ENCODE measurements at regions of chr2 and their contacts with region 1.

Region 1: DNA sequence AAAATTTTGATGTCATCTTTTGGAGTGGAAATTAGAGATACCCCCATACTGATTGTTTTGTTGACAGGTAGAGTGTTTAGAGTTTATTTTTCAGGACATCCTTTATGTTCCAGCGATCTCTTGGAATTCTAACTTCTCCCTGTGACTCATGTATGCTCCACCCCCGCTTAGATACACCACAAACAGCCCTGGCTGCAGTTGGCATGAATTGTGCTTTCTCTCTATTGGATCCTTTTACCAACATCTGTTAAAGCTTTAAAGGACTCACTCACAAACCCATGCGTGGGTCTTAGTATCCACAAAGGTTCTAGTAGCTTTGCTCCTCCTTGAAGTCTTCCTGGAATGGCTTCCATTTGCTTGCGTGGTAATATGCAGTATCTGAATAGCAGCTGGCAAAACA is 409.5 kb upstream of the POU3F3 start:
- DNase-seq: no peak
- H3K4me3 ChIP-seq: no peak overlapping the region
- H3K4me3 Mint-ChIP-seq: no peak overlapping the region
- H3K27ac ChIP-seq: no peak overlapping the region
- H3K27ac Mint-ChIP-seq: no peak overlapping the region
- H3K4me1 ChIP-seq: peaks cover 0 to 3% of the 10 kb centered on the region in 2 donors
- H3K4me1 Mint-ChIP-seq: peaks cover 9% of the 10 kb centered on the region
- H3K27me3 ChIP-seq: no peaks in the 10 kb centered on the region
- H3K27me3 Mint-ChIP-seq: peaks cover 0 to 11% (median 4%) of the 10 kb centered on the region in 3 donors
- CTCF ChIP-seq: no peak

Region 2: GRCh38 chr2:104344306-104344705 is 100.1 kb before region 1 on chr2:
- intact Hi-C with region 1: no loop called
- DNase-seq: no peak
- H3K4me3 ChIP-seq: no peak overlapping the region
- H3K4me3 Mint-ChIP-seq: no peak overlapping the region
- H3K27ac ChIP-seq: no peak overlapping the region
- H3K27ac Mint-ChIP-seq: no peak overlapping the region
- H3K4me1 ChIP-seq: no peaks in the 10 kb centered on the region
- H3K4me1 Mint-ChIP-seq: no peaks in the 10 kb centered on the region
- H3K27me3 ChIP-seq: no peaks in the 10 kb centered on the region
- H3K27me3 Mint-ChIP-seq: peaks cover 1 to 4% (median 3%) of the 10 kb centered on the region in 3 donors
- CTCF ChIP-seq: no peak

Region 3: GRCh38 chr2:104849618-104850141 is 405.3 kb after region 1 on chr2:
- intact Hi-C with region 1: loop called (anchors 5 kb)
- DNase-seq: peak; percentile 51 to 69 (median 66)
- H3K4me3 ChIP-seq: no peak overlapping the region
- H3K4me3 Mint-ChIP-seq: peak overlapping the region in 1 of 2 donors; percentile 82
- H3K27ac ChIP-seq: no peak overlapping the region
- H3K27ac Mint-ChIP-seq: no peak overlapping the region
- H3K4me1 ChIP-seq: peaks cover 30 to 38% of the 10 kb centered on the region in 2 donors
- H3K4me1 Mint-ChIP-seq: peaks cover 53% of the 10 kb centered on the region
- H3K27me3 ChIP-seq: peaks cover 88 to 97% of the 10 kb centered on the region in 2 donors
- H3K27me3 Mint-ChIP-seq: peaks cover 96 to 100% (median 98%) of the 10 kb centered on the region in 3 donors
- CTCF ChIP-seq: peak; percentile 93

Measured in CD14-positive monocyte (primary cell).